Astrocyte of the cerebellum (primary cell): ENCODE measurements at regions of chr17 and their contacts with region 1.

Region 1: GRCh38 chr17:19579867-19580565 is 46.4 kb downstream of the SLC47A1 start:
- DNase-seq: no peak
- H3K4me3 ChIP-seq: peak overlapping the region; percentile 7
- CTCF ChIP-seq: no peak

Region 2: GRCh38 chr17:19533718-19534561 is 46.1 kb before region 1 on chr17 and contains the start of gene SLC47A1:
- in situ Hi-C with region 1: no loop called
- DNase-seq: no peak
- H3K4me3 ChIP-seq: peak within 1 kb of the TSS; percentile 38
- CTCF ChIP-seq: no peak

Region 3: DNA sequence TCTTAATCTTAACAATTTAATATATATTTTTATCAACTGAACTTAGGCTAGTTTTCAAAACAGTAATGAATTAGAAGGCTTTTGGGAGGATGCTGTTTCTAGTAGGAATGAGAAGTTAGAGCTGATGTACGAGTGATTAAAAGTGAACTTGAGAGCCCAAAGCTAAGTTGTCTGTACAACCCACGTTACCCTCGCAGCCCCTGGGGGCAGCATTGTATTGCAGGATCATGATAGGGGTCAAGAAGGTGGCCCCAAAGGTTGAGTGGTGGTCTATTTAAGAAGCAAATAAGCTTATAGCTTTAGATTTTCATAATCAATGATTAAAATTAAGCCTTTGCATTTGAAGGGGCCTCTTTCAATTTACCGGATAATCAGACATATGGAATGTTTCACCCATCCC is 34.9 kb after region 1 on chr17:
- in situ Hi-C with region 1: loop called (anchors 5 kb)
- DNase-seq: no peak
- H3K4me3 ChIP-seq: no peak overlapping the region
- CTCF ChIP-seq: no peak

Region 4: GRCh38 chr17:19630661-19631060 is 50.6 kb after region 1 on chr17:
- in situ Hi-C with region 1: no loop called
- DNase-seq: no peak
- H3K4me3 ChIP-seq: no peak overlapping the region
- CTCF ChIP-seq: no peak

Region 5: DNA sequence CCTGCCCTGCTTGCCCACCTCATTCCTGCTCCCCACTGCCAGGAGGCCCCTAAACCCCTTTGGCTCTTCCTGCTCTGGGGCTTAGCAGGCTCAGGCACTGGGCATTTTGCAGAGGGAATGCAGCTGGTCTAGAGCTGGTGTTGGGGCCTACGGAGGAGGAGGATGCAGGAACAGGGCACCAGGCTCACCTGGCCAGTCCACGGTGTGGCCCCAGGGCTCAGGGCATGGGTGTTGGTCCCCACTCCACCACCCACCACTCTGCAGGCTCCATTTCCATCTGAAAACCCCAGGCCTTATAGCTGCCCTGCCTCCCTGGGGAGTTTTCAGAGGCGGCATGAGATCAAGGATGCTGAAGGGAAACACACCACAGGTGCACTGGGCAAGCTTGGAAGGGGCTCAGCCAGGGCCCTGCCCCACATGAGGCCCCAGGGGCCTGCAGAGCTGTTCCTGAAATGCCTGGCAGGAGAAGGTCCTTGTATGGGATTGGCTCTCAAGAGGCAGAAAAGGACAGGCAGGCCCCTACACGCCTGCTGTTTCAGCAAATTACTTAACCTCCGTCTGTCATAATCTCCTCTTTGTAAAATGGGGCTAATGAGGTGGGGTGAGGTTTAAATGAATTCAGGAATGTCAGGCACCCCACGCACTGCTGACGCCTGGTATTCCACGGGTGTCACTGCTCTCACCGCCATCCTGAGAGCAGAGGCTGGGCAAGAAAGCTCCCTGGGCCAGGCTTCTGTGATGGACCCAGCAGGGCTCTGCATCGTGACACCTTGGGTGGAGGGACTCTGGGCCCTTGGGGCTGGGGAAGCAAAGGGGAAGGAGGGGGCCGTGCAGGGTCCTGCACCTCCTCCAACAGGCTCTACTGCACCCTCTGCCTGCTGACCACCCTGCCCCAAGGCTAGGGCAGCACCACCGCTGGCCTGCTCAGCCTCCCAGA is 127.0 kb after region 1 on chr17:
- in situ Hi-C with region 1: no loop called
- DNase-seq: no peak
- H3K4me3 ChIP-seq: no peak overlapping the region
- CTCF ChIP-seq: no peak

Region 6: DNA sequence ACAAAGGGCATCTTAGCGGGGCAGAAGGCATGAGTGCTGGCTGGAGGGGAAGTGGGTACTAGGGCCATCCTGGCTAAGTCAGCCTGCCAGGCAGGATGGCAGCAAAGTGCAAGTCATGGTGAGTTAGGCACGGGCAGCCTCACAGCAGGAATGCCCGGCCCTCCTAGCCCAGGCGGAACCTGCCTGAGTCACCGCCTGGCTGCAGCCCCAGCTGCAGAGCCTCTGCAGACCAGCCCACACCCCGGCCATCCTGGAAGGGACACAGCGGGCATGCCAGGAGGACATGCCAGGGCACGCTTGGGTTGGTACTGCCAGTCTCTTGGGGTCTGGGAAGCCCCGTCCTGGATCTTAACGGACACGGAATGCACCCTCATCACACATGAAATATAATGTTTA is 173.0 kb after region 1 on chr17:
- in situ Hi-C with region 1: no loop called
- DNase-seq: no peak
- H3K4me3 ChIP-seq: no peak overlapping the region
- CTCF ChIP-seq: no peak